ENCODE measurements at regions of chr1 and their contacts with region 1.

Region 1: GRCh38 chr1:161792740-161793139 is 26.6 kb downstream of the ATF6 start:
- DNase-seq: peak; percentile 88
- H3K4me3 ChIP-seq: no peak overlapping the region
- H3K27ac ChIP-seq: peak overlapping the region; percentile 2
- H3K4me1 ChIP-seq: peaks cover 14% of the 10 kb centered on the region
- H3K27me3 ChIP-seq: no peaks in the 10 kb centered on the region
- CTCF ChIP-seq: peak; percentile 26 to 39
- POLR2A ChIP-seq: peak; percentile 60

Region 2: DNA sequence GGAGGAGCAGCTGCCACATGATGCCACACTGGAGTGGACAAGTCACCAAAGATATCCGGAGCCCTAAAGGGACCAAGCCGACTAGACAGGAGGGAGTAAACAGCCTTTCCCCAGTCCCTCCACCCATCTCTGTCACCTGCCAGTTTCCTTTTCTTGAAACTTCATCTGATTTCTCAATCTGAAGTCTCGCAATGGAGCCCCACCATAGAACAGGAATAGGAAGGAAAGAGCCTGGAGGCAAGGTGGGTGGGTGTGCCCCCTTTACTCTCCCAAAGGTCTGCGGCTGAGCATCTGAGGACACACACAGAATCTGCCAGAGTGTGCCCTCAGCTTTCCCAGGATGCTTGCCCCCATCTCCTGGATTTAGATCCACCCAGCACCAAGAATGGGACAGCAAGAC is 161.7 kb before region 1 on chr1 and contains the start of gene FCGR3B:
- CTCF ChIA-PET with region 1: no interaction called
- POLR2A ChIA-PET with region 1: no interaction called
- dilution Hi-C with region 1: no loop called
- intact Hi-C with region 1: no loop called
- DNase-seq: no peak
- H3K4me3 ChIP-seq: no peak within 1 kb of the TSS
- H3K27ac ChIP-seq: no peak within 1 kb of the TSS
- H3K4me1 ChIP-seq: no peaks in the 10 kb centered on the region
- H3K27me3 ChIP-seq: peaks cover 0 to 1% of the 10 kb centered on the region in 2 experiments
- CTCF ChIP-seq: no peak
- POLR2A ChIP-seq: no peak
- total RNA-seq, gene FCGR3B: not detected in 2 replicates

Region 3: GRCh38 chr1:161772397-161772796 is 20.3 kb before region 1 on chr1:
- CTCF ChIA-PET with region 1: interaction called, 13 read pairs
- POLR2A ChIA-PET with region 1: no interaction called
- dilution Hi-C with region 1: no loop called
- intact Hi-C with region 1: no loop called
- DNase-seq: peak; percentile 73
- H3K4me3 ChIP-seq: no peak overlapping the region
- H3K27ac ChIP-seq: no peak overlapping the region
- H3K4me1 ChIP-seq: peaks cover 43% of the 10 kb centered on the region
- H3K27me3 ChIP-seq: no peaks in the 10 kb centered on the region
- CTCF ChIP-seq: no peak
- POLR2A ChIP-seq: no peak

Region 4: GRCh38 chr1:161864577-161864976 is 71.8 kb after region 1 on chr1:
- CTCF ChIA-PET with region 1: interaction called, 26 read pairs
- POLR2A ChIA-PET with region 1: no interaction called
- dilution Hi-C with region 1: no loop called
- intact Hi-C with region 1: no loop called
- DNase-seq: peak; percentile 69
- H3K4me3 ChIP-seq: no peak overlapping the region
- H3K27ac ChIP-seq: no peak overlapping the region
- H3K4me1 ChIP-seq: peaks cover 6% of the 10 kb centered on the region
- H3K27me3 ChIP-seq: no peaks in the 10 kb centered on the region
- CTCF ChIP-seq: peak; percentile 7 to 27
- POLR2A ChIP-seq: no peak

Region 5: GRCh38 chr1:161962091-161962887 is 169.5 kb after region 1 on chr1:
- CTCF ChIA-PET with region 1: interaction called, 8 read pairs
- POLR2A ChIA-PET with region 1: no interaction called
- dilution Hi-C with region 1: no loop called
- intact Hi-C with region 1: loop called (anchors 5 kb)
- DNase-seq: peak; percentile 96
- H3K4me3 ChIP-seq: peak overlapping the region in 2 of 3 experiments; percentile 17 to 80
- H3K27ac ChIP-seq: peak overlapping the region; percentile 98
- H3K4me1 ChIP-seq: peaks cover 21% of the 10 kb centered on the region
- H3K27me3 ChIP-seq: no peaks in the 10 kb centered on the region
- CTCF ChIP-seq: no peak
- POLR2A ChIP-seq: no peak

Region 6: DNA sequence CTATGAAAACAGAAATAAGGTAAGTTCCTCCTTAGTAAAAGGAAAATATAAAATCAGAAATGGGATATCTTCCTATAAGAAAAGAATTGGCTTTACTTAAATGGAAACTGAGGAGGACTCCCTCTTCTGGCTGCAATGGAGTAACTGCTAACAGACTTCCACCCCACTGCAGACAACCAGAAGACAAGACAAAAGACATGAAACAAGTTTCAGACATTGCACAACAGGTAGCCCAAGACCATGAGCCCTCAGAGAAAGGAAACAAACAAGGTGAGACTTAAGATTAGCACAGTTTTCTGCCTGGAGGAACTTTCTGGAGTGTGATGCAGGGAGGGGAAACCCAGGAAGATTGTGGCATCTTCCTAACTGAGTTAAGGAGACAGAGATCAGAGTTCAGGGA is 247.9 kb after region 1 on chr1:
- CTCF ChIA-PET with region 1: interaction called, 754 read pairs
- POLR2A ChIA-PET with region 1: interaction called, 12 read pairs
- dilution Hi-C with region 1: no loop called
- intact Hi-C with region 1: loop called (anchors 1 kb)
- DNase-seq: peak; percentile 40
- H3K4me3 ChIP-seq: no peak overlapping the region
- H3K27ac ChIP-seq: no peak overlapping the region
- H3K4me1 ChIP-seq: peaks cover under 1% of the 10 kb centered on the region
- H3K27me3 ChIP-seq: peaks cover 0 to 2% of the 10 kb centered on the region in 2 experiments
- CTCF ChIP-seq: peak; percentile 45 to 65
- POLR2A ChIP-seq: no peak

Region 7: DNA sequence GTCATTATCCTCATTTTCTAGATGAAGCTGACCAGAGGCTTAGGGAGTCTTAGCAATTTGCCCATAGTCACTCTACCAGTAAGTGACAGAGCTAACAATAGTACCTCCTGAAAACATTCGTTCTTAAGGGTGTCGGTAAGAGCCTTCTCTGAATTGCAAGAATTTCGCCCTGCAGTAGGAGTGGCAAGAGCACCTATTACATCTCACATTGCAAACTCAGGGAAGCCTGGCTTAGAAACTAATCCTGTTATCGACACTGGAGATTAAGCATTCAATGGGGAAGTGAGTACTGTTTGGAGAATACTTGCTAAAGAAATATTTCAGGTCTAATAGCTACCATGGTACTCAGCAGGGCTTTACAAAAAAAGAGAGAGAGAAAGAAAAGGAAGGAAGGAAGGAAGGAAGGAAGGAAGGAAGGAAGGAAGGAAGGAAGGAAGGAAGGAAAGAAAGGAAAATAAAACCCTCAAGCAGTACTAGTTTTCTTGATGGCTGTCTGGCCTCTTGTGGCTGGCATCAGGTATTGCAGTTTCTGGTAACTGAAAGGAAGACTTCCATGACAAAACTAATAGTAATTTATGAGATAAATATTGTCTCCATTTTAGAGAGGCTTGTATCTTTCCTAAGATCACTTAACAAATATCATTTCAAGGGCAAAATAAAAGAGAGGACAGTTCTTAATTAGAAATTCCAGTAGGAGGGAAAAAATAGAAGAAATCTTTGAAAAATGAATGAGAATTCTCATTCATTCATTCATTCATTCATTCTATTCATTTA is 599.2 kb after region 1 on chr1:
- CTCF ChIA-PET with region 1: interaction called, 3 read pairs
- POLR2A ChIA-PET with region 1: no interaction called
- dilution Hi-C with region 1: no loop called
- intact Hi-C with region 1: loop called (anchors 2 kb)
- DNase-seq: peak; percentile 43
- H3K4me3 ChIP-seq: no peak overlapping the region
- H3K27ac ChIP-seq: no peak overlapping the region
- H3K4me1 ChIP-seq: no peaks in the 10 kb centered on the region
- H3K27me3 ChIP-seq: peaks cover 0 to 6% of the 10 kb centered on the region in 2 experiments
- CTCF ChIP-seq: peak; percentile 64 to 70
- POLR2A ChIP-seq: no peak

Measured in endothelial cell of umbilical vein (primary cell).